ENCODE measurements at regions of chr1 and their contacts with region 1.

Region 1: GRCh38 chr1:103514920-103515503 is 10.5 kb upstream of the RNPC3 start:
- DNase-seq: no peak
- H3K4me3 Mint-ChIP-seq: no peak overlapping the region
- H3K27ac Mint-ChIP-seq: no peak overlapping the region
- H3K4me1 Mint-ChIP-seq: no peaks in the 10 kb centered on the region
- H3K27me3 Mint-ChIP-seq: no peaks in the 10 kb centered on the region
- CTCF ChIP-seq: no peak

Region 2: GRCh38 chr1:103106426-103107341 is 408.3 kb before region 1 on chr1:
- CTCF ChIA-PET with region 1: no interaction called
- intact Hi-C with region 1: loop called (anchors 5 kb)
- DNase-seq: peak; percentile 2
- H3K4me3 Mint-ChIP-seq: no peak overlapping the region
- H3K27ac Mint-ChIP-seq: no peak overlapping the region
- H3K4me1 Mint-ChIP-seq: no peaks in the 10 kb centered on the region
- H3K27me3 Mint-ChIP-seq: no peaks in the 10 kb centered on the region
- CTCF ChIP-seq: peak; percentile 18

Region 3: GRCh38 chr1:103461161-103462105 is 53.6 kb before region 1 on chr1:
- CTCF ChIA-PET with region 1: no interaction called
- intact Hi-C with region 1: loop called (anchors 5 kb)
- DNase-seq: no peak
- H3K4me3 Mint-ChIP-seq: no peak overlapping the region
- H3K27ac Mint-ChIP-seq: no peak overlapping the region
- H3K4me1 Mint-ChIP-seq: no peaks in the 10 kb centered on the region
- H3K27me3 Mint-ChIP-seq: no peaks in the 10 kb centered on the region
- CTCF ChIP-seq: no peak